AG04450 (cell line): ENCODE measurements at regions of chr10 and their contacts with region 1.

Region 1: GRCh38 chr10:117980216-117980615 is 66.5 kb downstream of the RAB11FIP2 start:
- DNase-seq: peak; percentile 36
- H3K4me3 ChIP-seq: no peak overlapping the region
- H3K27ac ChIP-seq: no peak overlapping the region
- H3K27me3 ChIP-seq: no peaks in the 10 kb centered on the region
- CTCF ChIP-seq: no peak

Region 2: GRCh38 chr10:117876210-117876609 is 104.0 kb before region 1 on chr10:
- CTCF ChIA-PET with region 1: interaction called, 16 read pairs
- POLR2A ChIA-PET with region 1: no interaction called
- DNase-seq: no peak
- H3K4me3 ChIP-seq: no peak overlapping the region
- H3K27ac ChIP-seq: no peak overlapping the region
- H3K27me3 ChIP-seq: no peaks in the 10 kb centered on the region
- CTCF ChIP-seq: no peak

Region 3: DNA sequence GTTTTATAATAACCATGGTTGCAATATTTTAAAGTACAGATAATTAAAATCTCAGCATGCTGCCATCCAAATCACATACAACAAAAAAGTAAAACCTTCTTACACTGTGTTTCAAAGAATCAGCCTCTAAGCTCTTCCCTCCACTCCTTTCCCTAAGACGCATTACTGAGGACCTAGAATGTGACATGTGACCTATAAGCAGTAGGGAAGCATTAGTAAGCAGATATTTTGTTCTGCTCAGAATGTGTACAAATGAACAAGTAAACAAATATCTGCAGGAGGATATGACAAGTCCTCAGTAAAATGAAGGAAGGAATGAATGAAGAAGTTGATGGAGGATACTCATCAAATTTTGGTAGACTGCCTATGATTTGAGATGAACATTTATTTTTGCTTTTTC is 17.5 kb after region 1 on chr10:
- CTCF ChIA-PET with region 1: no interaction called
- POLR2A ChIA-PET with region 1: no interaction called
- DNase-seq: no peak
- H3K4me3 ChIP-seq: no peak overlapping the region
- H3K27ac ChIP-seq: no peak overlapping the region
- H3K27me3 ChIP-seq: no peaks in the 10 kb centered on the region
- CTCF ChIP-seq: no peak